ENCODE measurements at regions of chr2 and their contacts with region 1.

Region 1: DNA sequence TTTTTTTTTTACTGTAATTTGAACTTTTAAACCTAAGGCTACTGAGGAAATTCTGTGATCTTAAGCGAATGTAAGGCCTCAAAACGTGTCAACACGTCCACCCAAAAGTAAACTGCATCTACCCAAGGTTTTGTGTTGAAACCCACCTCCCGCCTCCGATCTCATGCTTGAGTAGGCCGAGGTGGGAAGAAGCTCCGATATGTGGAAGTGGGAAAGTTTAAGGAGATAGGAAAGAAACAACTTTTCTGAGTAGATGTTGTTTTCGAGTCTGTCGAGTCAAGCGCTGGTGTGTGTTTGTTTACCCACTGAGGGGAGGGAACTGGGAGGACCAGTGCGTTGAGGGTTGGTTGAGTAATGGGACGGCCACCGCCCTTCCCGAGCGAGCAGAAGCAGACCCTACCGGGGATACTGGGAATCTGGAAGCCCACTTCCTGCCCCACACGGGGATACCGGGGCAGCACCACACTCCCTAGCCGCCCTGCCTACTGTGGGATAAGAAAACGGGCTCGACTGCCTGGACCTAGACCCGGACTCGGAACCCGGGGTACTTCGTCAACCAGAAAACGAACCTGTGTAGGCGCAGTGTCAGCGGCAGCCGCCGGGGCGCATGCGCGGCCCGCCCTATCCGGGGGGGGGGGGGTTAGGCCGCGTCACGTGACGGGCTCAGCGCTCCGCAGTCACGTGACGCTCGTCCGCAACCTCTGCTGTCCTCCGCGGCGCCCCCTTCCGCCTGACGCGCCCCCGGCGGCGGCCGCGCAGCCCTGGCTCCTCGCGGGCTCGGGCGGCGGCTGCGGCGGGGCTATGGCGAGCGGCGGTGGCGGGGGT is at the start of gene RETREG2:
- DNase-seq: peak; percentile 79 to 86 (median 83)
- ATAC-seq: peak; percentile 73
- H3K4me3 ChIP-seq: peak within 1 kb of the TSS; percentile 97
- H3K4me3 Mint-ChIP-seq: peak within 1 kb of the TSS; percentile 90 to 99 (median 96)
- H3K27ac ChIP-seq: peak within 1 kb of the TSS; percentile 96
- H3K27ac Mint-ChIP-seq: peak within 1 kb of the TSS; percentile 97 to 100 (median 99)
- H3K4me1 ChIP-seq: peaks cover 44 to 47% of the 10 kb centered on the region in 2 donors
- H3K4me1 Mint-ChIP-seq: peaks cover 48 to 80% (median 69%) of the 10 kb centered on the region in 7 donors
- H3K27me3 ChIP-seq: no peaks in the 10 kb centered on the region
- H3K27me3 Mint-ChIP-seq: no peaks in the 10 kb centered on the region
- total RNA-seq, gene RETREG2: 70.2 to 124 (median 90.9) TPM

Region 2: DNA sequence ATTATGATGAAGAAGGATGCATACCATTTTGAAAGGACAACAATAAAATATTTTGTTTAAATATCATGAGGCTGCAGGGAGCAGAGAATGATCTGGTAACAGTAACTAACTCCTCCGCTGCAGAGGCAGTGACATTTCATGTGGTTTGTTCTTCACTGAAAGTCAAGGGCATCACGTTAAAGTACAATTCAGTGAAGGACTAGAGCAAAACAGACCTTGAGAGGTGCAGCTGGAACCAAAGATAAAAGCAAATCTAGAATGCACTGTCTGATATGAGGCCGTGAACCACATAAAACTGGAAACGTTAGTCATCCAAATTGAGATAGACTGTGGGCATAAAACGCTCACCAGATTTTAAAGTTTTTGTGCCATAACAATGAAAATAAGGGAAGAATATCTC is 1795.0 kb before region 1 on chr2:
- CTCF ChIA-PET with region 1: no interaction called
- POLR2A ChIA-PET with region 1: no interaction called
- intact Hi-C with region 1: no loop called
- DNase-seq: no peak
- ATAC-seq: no peak
- H3K4me3 ChIP-seq: no peak overlapping the region
- H3K4me3 Mint-ChIP-seq: no peak overlapping the region
- H3K27ac ChIP-seq: no peak overlapping the region
- H3K27ac Mint-ChIP-seq: no peak overlapping the region
- H3K4me1 ChIP-seq: no peaks in the 10 kb centered on the region
- H3K4me1 Mint-ChIP-seq: peaks cover 0 to 20% (median 4%) of the 10 kb centered on the region in 7 donors
- H3K27me3 ChIP-seq: no peaks in the 10 kb centered on the region
- H3K27me3 Mint-ChIP-seq: peaks cover 0 to 6% (median 0%) of the 10 kb centered on the region in 5 donors

Region 3: DNA sequence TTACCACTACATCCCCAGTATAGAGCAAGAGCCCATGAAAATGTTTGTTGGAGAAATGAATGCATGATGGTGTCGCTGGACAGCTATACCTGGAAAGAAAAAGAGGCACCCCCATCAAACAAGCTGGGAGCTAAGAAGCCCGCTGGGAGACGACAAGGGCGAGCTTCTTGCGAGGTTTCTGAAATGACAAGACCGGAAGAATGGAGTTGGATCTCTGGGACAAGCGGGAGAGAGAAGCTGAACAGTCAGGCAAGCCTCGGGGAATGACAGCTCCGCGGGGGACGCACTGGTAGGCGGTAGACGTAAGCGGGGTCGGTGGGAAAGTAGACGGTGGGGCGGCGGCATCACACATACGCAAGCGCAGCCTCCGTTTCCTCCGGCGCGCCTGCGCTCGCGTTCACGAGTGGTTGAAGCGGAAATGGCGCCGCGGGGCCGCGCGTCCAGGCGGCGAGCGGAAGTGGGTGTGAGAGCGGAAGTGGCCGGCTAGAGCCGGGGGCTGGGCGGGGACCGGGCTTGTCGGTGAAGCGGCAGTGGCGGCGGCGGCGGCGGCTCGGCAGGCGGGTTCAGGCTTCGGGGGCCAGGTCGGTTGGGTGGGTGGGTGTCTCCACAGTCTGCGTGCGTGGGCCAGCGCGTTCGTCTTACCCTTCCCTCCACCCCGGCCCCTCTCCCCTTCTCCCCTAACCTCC is 960.9 kb before region 1 on chr2 and contains the start of gene ARPC2:
- CTCF ChIA-PET with region 1: no interaction called
- POLR2A ChIA-PET with region 1: no interaction called
- intact Hi-C with region 1: loop called in 1 of 2 experiments (anchors 5 kb)
- DNase-seq: peak; percentile 91 to 97 (median 95)
- ATAC-seq: peak; percentile 90
- H3K4me3 ChIP-seq: peak within 1 kb of the TSS; percentile 90
- H3K4me3 Mint-ChIP-seq: peak within 1 kb of the TSS; percentile 90 to 97 (median 94)
- H3K27ac ChIP-seq: peak within 1 kb of the TSS; percentile 99
- H3K27ac Mint-ChIP-seq: peak within 1 kb of the TSS; percentile 94 to 98 (median 97)
- H3K4me1 ChIP-seq: peaks cover 25 to 33% of the 10 kb centered on the region in 2 donors
- H3K4me1 Mint-ChIP-seq: peaks cover 31 to 48% (median 42%) of the 10 kb centered on the region in 7 donors
- H3K27me3 ChIP-seq: no peaks in the 10 kb centered on the region
- H3K27me3 Mint-ChIP-seq: peaks cover 0 to 6% (median 0%) of the 10 kb centered on the region in 5 donors
- total RNA-seq, gene ARPC2: 330 to 694 (median 368) TPM

Region 4: DNA sequence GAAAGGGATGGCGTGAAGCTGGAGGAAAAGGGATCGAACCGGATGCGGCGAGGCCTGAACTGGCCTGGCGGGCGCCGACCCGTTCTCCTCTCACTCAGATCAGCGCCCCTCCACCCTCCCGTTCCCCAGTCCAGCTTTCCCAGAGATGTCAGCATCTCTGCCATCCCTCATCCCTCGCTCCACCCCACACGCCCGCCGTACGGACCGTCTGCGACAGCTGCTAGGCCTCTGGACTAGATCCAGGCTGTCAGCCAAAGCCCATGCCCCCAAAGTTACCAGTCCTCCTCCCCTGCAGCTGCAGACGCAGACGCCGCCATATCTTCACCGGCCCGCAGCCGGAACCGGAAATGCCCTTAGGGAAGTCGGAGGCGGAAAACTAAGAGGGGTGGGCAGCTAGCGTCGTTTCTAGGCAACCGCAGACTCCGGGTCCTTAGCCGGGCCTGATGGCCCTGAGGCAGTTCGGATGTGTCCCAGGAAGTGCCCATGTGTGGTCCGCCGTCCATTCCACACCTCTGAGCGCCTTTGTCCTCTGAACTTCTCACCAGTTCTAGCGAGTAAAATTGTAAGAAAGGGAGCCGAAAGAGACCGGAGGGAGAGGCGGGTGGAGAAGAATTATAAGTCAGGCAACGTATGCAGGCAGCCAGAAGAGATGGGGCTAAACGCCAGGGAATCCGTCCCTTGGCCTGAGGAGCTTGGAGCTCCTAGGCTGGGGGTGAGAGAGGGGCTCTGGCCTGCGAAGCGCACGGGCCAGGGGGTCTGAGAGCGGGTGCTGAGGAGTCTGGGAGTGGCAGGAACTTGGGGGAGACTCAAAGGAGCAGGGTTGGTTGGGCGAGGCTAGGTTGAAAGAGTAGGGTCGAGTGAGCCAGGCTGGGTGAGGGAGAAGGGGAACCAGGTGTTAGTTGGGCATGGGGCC is 505.9 kb before region 1 on chr2 and contains the starts of genes RNF25 and STK36:
- CTCF ChIA-PET with region 1: no interaction called
- POLR2A ChIA-PET with region 1: no interaction called
- intact Hi-C with region 1: loop called in 1 of 2 experiments (anchors 2 kb)
- DNase-seq: peak; percentile 60 to 86 (median 79)
- ATAC-seq: peak; percentile 96
- H3K4me3 ChIP-seq: peak within 1 kb of the TSS; percentile 81
- H3K4me3 Mint-ChIP-seq: peak within 1 kb of the TSS; percentile 88 to 100 (median 98)
- H3K27ac ChIP-seq: peak within 1 kb of the TSS; percentile 84
- H3K27ac Mint-ChIP-seq: peak within 1 kb of the TSS; percentile 90 to 98 (median 96)
- H3K4me1 ChIP-seq: peaks cover 9 to 15% of the 10 kb centered on the region in 2 donors
- H3K4me1 Mint-ChIP-seq: peaks cover 14 to 29% (median 24%) of the 10 kb centered on the region in 7 donors
- H3K27me3 ChIP-seq: no peaks in the 10 kb centered on the region
- H3K27me3 Mint-ChIP-seq: no peaks in the 10 kb centered on the region
- total RNA-seq, gene RNF25: 12.6 to 33.4 (median 28.3) TPM
- total RNA-seq, gene STK36: 18.9 to 28.1 (median 19.7) TPM

Region 5: GRCh38 chr2:219160186-219161017 is 17.4 kb before region 1 on chr2 and contains the start of gene NHEJ1:
- CTCF ChIA-PET with region 1: interaction called, 7 read pairs
- POLR2A ChIA-PET with region 1: interaction called, 32 read pairs
- intact Hi-C with region 1: loop called (anchors 1 kb)
- DNase-seq: peak; percentile 84 to 98 (median 92)
- ATAC-seq: peak; percentile 96
- H3K4me3 ChIP-seq: peak within 1 kb of the TSS; percentile 70
- H3K4me3 Mint-ChIP-seq: peak within 1 kb of the TSS; percentile 88 to 97 (median 93)
- H3K27ac ChIP-seq: peak within 1 kb of the TSS; percentile 77
- H3K27ac Mint-ChIP-seq: peak within 1 kb of the TSS; percentile 81 to 97 (median 93)
- H3K4me1 ChIP-seq: peaks cover 11 to 12% of the 10 kb centered on the region in 2 donors
- H3K4me1 Mint-ChIP-seq: peaks cover 13 to 41% (median 24%) of the 10 kb centered on the region in 7 donors
- H3K27me3 ChIP-seq: no peaks in the 10 kb centered on the region
- H3K27me3 Mint-ChIP-seq: no peaks in the 10 kb centered on the region
- total RNA-seq, gene NHEJ1: 11.4 to 24.0 (median 17.9) TPM

Region 6: DNA sequence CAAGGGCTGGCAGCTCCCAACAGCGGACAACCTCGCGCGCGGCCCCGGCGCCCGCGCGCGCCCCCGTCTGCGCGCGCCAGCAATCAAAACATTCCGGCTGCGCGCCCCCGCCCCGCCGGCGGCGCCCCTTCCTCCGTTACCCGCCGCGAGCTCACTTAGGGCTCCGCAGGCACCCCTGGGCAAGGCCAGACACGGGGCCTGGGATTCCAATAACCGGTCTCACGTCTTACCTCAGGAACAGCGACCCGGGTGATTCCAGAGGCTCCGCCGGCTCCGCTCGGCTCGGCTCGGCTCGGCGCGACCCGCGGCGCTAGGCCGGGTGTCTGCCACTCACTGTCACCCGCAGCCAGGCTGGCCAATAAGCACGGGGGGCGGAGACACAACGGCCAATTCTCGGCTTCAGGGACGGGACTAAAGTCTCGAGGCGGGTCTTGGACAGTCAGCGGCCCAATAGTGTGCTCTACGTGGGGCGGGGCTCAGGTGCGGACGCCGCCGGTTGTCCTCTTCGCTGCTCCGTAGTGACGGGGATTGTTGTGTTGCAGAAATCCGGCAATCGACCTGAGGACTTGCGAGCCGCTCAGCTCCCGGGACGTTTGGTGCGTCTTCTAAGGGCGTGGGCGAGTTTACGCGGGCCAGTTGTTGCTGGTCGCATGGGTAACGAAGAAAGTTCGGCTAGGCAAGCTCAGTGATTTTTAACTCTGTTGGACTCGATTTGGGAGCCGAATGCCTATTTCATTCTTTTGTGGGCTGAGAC is 51.7 kb after region 1 on chr2 and contains the starts of genes ANKZF1 and ATG9A:
- CTCF ChIA-PET with region 1: interaction called, 4 read pairs
- POLR2A ChIA-PET with region 1: interaction called, 49 read pairs
- intact Hi-C with region 1: loop called (anchors 1 kb)
- DNase-seq: peak; percentile 92 to 99 (median 99)
- ATAC-seq: peak; percentile 98
- H3K4me3 ChIP-seq: peak within 1 kb of the TSS; percentile 80
- H3K4me3 Mint-ChIP-seq: peak within 1 kb of the TSS; percentile 94 to 100 (median 98)
- H3K27ac ChIP-seq: peak within 1 kb of the TSS; percentile 90
- H3K27ac Mint-ChIP-seq: peak within 1 kb of the TSS; percentile 96 to 100 (median 96)
- H3K4me1 ChIP-seq: peaks cover 17 to 22% of the 10 kb centered on the region in 2 donors
- H3K4me1 Mint-ChIP-seq: peaks cover 33 to 83% (median 69%) of the 10 kb centered on the region in 7 donors
- H3K27me3 ChIP-seq: no peaks in the 10 kb centered on the region
- H3K27me3 Mint-ChIP-seq: no peaks in the 10 kb centered on the region
- total RNA-seq, gene ANKZF1: 117 to 287 (median 169) TPM
- total RNA-seq, gene ATG9A: 52.6 to 66.0 (median 60.9) TPM

Region 7: GRCh38 chr2:219294356-219295351 is 116.9 kb after region 1 on chr2:
- CTCF ChIA-PET with region 1: interaction called, 5 read pairs
- POLR2A ChIA-PET with region 1: interaction called, 22 read pairs
- intact Hi-C with region 1: loop called (anchors 1 kb)
- DNase-seq: peak; percentile 80 to 93 (median 90)
- ATAC-seq: peak; percentile 99
- H3K4me3 ChIP-seq: peak overlapping the region; percentile 47
- H3K4me3 Mint-ChIP-seq: peak overlapping the region; percentile 68 to 89 (median 82)
- H3K27ac ChIP-seq: peak overlapping the region; percentile 79
- H3K27ac Mint-ChIP-seq: peak overlapping the region; percentile 56 to 88 (median 84)
- H3K4me1 ChIP-seq: peaks cover 2 to 20% of the 10 kb centered on the region in 2 donors
- H3K4me1 Mint-ChIP-seq: peaks cover 11 to 34% (median 27%) of the 10 kb centered on the region in 7 donors
- H3K27me3 ChIP-seq: no peaks in the 10 kb centered on the region
- H3K27me3 Mint-ChIP-seq: peaks cover 0 to 9% (median 0%) of the 10 kb centered on the region in 5 donors